Sigmoid colon (tissue), 7 donors: ENCODE measurements at regions of chr6 and their contacts with region 1.

Region 1: DNA sequence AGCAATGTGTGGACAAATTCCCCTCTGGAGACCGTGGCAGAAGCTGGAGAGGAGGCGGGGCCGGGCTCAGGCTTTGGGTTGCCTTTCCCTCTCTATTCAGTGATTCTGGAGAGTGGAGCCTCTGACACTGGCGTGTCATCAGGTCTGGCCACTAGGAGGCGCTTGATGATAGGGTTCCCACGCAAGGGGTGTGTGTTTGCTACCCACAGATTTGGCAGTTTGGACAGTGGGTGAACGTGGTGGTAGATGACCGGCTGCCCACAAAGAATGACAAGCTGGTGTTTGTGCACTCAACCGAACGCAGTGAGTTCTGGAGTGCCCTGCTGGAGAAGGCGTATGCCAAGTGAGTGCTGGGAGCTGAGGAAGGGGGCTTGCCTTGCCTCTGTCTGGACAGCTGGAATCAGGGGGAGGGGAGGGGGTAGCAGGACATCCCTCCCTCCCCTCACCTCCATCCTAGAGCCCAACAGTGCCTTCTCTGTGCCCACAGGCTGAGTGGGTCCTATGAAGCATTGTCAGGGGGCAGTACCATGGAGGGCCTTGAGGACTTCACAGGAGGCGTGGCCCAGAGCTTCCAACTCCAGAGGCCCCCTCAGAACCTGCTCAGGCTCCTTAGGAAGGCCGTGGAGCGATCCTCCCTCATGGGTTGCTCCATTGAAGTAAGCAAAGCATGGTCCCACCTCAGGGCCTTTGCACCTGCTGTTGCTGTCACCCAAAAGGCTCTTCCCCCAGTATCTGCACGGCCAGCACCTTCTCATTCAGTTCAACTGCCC is 14.3 kb downstream of the CAPN11 start:
- DNase-seq: peak; percentile 93
- H3K4me3 ChIP-seq: no peak overlapping the region
- H3K27ac ChIP-seq: no peak overlapping the region
- H3K4me1 ChIP-seq: peaks cover 0 to 9% (median 2%) of the 10 kb centered on the region in 4 donors
- H3K27me3 ChIP-seq: no peaks in the 10 kb centered on the region
- CTCF ChIP-seq: peak; percentile 81 to 95 (median 89)
- EP300 ChIP-seq: no peak
- POLR2A ChIP-seq: no peak

Region 2: GRCh38 chr6:44192428-44193041 is 19.6 kb after region 1 on chr6:
- intact Hi-C with region 1: no loop called
- DNase-seq: no peak
- H3K4me3 ChIP-seq: no peak overlapping the region
- H3K27ac ChIP-seq: peak overlapping the region in 1 of 4 donors; percentile 33
- H3K4me1 ChIP-seq: no peaks in the 10 kb centered on the region
- H3K27me3 ChIP-seq: no peaks in the 10 kb centered on the region
- CTCF ChIP-seq: no peak
- EP300 ChIP-seq: no peak
- POLR2A ChIP-seq: no peak

Region 3: GRCh38 chr6:44221291-44221960 is 48.5 kb after region 1 on chr6:
- intact Hi-C with region 1: loop called (anchors 1 kb)
- DNase-seq: peak; percentile 98
- H3K4me3 ChIP-seq: peak overlapping the region; percentile 63 to 78 (median 68)
- H3K27ac ChIP-seq: peak overlapping the region; percentile 94 to 98 (median 97)
- H3K4me1 ChIP-seq: peaks cover 0 to 94% (median 89%) of the 10 kb centered on the region in 4 donors
- H3K27me3 ChIP-seq: no peaks in the 10 kb centered on the region
- CTCF ChIP-seq: peak; percentile 84 to 93 (median 90)
- EP300 ChIP-seq: peak in 2 of 4 donors; percentile 28 to 67
- POLR2A ChIP-seq: no peak

Region 4: DNA sequence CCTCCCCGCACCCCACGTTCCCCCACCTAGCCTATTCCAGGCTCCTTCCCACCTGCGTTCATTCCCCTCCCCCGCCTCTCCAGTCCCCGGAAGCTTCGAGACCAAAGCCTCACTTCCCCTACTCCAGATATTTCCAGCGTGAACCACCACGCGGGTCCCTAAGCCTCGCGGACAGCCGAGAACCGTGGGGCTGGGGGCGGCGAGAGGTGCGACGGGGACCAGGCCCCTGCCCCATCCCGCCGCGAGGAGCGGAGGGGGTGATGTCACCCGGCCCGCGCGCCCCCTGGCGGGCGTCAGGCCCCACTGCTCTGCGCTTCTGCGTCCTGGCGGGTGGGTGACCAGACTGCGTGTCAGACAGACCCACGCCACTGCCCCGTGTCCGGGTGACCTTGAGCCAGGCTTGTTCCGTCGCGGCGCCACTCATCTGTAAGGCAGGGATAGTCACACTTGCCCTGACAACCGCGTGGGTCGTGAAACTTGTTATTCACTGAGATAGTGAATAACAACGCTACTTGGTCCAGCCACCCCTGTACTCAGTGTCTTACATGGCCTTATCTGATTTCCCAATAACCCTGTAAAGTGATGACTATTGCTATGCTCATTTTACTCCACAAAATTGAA is 65.0 kb after region 1 on chr6:
- intact Hi-C with region 1: loop called (anchors 1 kb)
- DNase-seq: peak; percentile 91
- H3K4me3 ChIP-seq: peak overlapping the region; percentile 50 to 67 (median 62)
- H3K27ac ChIP-seq: peak overlapping the region; percentile 94 to 98 (median 97)
- H3K4me1 ChIP-seq: peaks cover 0 to 55% (median 50%) of the 10 kb centered on the region in 4 donors
- H3K27me3 ChIP-seq: no peaks in the 10 kb centered on the region
- CTCF ChIP-seq: peak; percentile 98 to 99 (median 98)
- EP300 ChIP-seq: peak in 1 of 4 donors; percentile 23
- POLR2A ChIP-seq: peak in 1 of 2 donors; percentile 24

Region 5: DNA sequence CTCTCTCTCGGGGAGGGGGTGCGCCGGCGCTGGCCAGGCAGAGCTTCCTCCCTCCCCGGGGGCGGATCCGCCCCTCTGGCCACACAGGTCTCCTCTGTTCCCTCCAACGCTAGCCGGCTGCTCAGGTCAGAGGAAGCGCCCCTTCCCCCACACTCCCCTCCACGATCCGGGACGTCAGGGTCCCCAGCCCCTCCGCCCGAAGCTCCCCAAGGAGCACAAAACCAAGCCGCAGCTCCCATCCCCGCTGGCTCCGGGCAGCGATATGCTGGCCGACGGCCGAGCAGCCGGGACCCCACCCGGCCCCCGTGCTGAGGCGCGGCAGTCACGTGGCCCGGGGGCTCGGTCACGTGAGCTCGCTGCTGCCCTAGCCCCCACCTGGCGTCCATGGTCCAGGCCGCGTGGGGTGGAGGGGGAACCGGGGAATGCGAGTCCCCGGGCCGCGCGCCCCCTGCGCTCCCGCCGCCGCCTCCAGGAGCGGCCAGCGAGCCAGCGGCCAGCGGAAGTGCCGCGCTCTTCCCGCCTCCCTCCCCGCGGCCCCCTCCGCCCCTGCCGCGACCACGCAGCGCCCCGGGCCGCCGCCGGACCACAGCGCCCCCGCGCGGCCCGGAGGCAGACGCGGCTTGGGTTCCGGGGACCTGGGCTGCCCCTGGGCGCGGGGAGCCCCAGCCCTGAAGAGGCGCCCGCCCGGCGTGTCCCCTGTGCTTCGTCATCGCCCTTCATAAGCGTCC is 84.3 kb after region 1 on chr6 and contains the start of gene SLC35B2:
- intact Hi-C with region 1: loop called (anchors 1 kb)
- DNase-seq: peak; percentile 84
- H3K4me3 ChIP-seq: peak within 1 kb of the TSS; percentile 76 to 94 (median 90)
- H3K27ac ChIP-seq: peak within 1 kb of the TSS; percentile 88 to 95 (median 92)
- H3K4me1 ChIP-seq: peaks cover 0 to 26% (median 19%) of the 10 kb centered on the region in 4 donors
- H3K27me3 ChIP-seq: no peaks in the 10 kb centered on the region
- CTCF ChIP-seq: peak in 2 of 4 experiments; percentile 4 to 76
- EP300 ChIP-seq: no peak
- POLR2A ChIP-seq: peak in 1 of 2 donors; percentile 28
- total RNA-seq, gene SLC35B2: 25.3 to 28.8 (median 27.2) TPM

Region 6: DNA sequence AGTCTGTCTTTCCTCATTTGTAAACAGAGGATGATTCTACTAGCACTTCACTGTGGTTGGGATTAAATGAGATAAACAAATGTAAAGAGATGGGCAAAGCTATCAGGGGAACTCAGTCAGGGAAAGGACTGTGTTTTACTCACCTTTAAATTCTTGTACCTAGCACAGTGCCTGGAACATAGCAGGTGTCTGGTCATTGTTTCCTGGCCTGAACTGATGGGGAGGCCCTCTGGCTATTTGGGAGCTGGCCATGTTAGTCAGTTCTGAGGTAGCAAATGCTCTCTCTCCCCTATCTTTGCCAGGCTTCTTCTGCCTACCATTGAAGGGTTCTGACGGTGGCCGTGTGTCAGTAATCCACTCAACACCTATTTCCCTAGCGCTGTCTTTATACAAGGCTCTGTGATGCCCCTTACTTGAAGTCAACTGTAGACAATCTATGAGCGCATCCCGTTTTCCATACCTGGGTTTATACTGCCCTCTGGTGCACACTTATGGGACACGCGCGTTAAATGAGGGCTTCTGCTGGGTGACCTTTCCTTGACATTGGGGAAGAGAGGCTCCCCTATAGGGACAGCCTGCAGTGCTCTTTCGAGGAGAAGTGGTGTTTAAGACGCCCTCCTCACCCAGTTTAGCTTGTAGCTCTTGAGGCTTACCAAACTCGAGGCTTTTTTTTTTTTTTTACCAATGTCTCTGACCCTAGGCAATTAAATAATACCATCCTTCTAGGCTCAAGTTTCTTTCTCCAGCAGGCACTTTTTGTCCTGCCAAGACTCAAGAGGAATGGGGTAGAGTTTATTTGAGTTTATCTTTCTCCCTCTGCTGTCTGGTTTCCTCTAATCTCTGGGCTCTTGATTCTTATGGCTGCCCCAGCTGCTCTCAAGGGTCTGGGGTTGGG is 165.6 kb after region 1 on chr6:
- intact Hi-C with region 1: loop called (anchors 5 kb)
- DNase-seq: no peak
- H3K4me3 ChIP-seq: no peak overlapping the region
- H3K27ac ChIP-seq: peak overlapping the region in 1 of 4 donors; percentile 54
- H3K4me1 ChIP-seq: peaks cover 0 to 7% (median 3%) of the 10 kb centered on the region in 4 donors
- H3K27me3 ChIP-seq: peaks cover 6 to 23% (median 14%) of the 10 kb centered on the region in 3 donors
- CTCF ChIP-seq: peak; percentile 50 to 67 (median 60)
- EP300 ChIP-seq: no peak
- POLR2A ChIP-seq: no peak